Naive thymus-derived CD4-positive, alpha-beta T cell (primary cell): ENCODE measurements at regions of chr10 and their contacts with region 1.

Region 1: DNA sequence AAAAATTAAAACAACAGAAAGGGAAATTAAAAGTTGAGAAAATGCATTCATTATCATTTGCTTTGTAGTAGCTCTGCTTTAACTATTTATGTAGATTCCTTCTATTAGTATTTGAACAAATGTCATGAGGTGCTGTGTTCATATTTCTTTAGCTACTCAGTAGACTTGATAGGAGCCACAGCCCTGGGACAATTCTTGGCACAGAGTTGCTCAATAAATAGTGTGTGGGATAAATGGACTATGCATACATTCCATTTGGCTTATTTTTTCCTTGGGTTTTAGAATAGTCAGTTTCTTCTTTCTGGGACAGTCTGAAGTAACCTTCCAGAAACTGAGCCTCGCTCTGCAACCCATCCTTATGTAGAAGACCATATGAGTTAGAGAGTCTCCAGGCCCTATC is 13.4 kb downstream of the RPP30 start:
- DNase-seq: no peak
- ATAC-seq: no peak
- H3K4me3 ChIP-seq: no peak overlapping the region
- H3K4me3 Mint-ChIP-seq: no peak overlapping the region
- H3K27ac ChIP-seq: no peak overlapping the region
- H3K27ac Mint-ChIP-seq: no peak overlapping the region
- H3K4me1 ChIP-seq: no peaks in the 10 kb centered on the region
- H3K4me1 Mint-ChIP-seq: peaks cover 0 to 8% (median 4%) of the 10 kb centered on the region in 7 donors
- H3K27me3 ChIP-seq: no peaks in the 10 kb centered on the region
- H3K27me3 Mint-ChIP-seq: no peaks in the 10 kb centered on the region

Region 2: GRCh38 chr10:91088300-91089140 is 203.3 kb after region 1 on chr10:
- CTCF ChIA-PET with region 1: interaction called, 4 read pairs
- POLR2A ChIA-PET with region 1: no interaction called
- intact Hi-C with region 1: loop called in 1 of 2 experiments (anchors 1 kb)
- DNase-seq: peak in 6 of 9 donors; percentile 10 to 37 (median 26)
- ATAC-seq: peak; percentile 64
- H3K4me3 ChIP-seq: no peak overlapping the region
- H3K4me3 Mint-ChIP-seq: no peak overlapping the region
- H3K27ac ChIP-seq: no peak overlapping the region
- H3K27ac Mint-ChIP-seq: peak overlapping the region in 2 of 9 donors; percentile 15 to 42
- H3K4me1 ChIP-seq: no peaks in the 10 kb centered on the region
- H3K4me1 Mint-ChIP-seq: peaks cover 0 to 2% (median 0%) of the 10 kb centered on the region in 7 donors
- H3K27me3 ChIP-seq: no peaks in the 10 kb centered on the region
- H3K27me3 Mint-ChIP-seq: peaks cover 0 to 11% (median 0%) of the 10 kb centered on the region in 5 donors

Region 3: DNA sequence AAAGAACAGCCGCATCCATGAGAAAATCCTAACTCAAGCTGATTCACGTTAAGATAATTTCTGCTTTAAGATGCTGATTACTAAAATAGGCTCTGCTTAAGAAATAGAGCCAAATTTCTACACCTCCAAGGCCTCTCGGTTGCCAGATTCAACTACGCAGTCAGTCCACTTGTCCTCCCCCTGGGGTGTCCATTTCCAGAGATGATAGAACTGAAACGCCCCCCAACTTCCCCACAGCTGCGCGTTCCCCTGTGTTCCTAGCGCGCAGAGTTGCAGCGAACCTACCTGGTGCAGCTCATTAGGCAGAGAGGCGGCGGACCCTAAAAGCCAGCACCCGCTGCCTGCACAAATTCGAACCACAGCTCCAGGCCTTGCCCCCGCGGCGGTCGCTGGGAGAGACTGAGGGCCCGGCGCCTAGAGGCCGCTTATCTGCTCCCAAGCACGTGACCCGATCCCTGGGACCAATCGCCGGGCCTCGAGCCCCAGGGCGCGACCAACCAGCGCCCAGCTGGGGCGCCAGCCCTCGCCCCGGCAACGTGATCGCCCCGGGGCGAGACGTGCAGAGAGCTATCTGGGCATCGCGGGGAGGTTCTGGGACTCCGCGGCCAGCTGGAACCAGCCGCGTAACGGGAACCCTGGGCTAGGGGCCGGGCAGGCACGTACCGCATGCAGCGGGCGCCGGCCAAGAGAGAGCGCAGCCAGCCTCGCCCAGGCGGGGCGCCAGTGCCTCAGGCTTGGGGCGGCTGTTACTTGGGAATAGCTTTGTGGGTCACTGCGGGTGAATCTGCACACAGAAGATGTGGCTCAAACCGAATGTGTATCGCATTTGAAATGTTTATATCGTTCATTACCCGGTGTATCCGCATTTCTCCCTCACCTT is 747.7 kb after region 1 on chr10 and contains the start of gene PPP1R3C:
- CTCF ChIA-PET with region 1: no interaction called
- POLR2A ChIA-PET with region 1: no interaction called
- intact Hi-C with region 1: loop called (anchors 2 to 10 kb)
- DNase-seq: peak; percentile 5 to 60 (median 17)
- ATAC-seq: peak; percentile 65
- H3K4me3 ChIP-seq: peak within 1 kb of the TSS; percentile 33
- H3K4me3 Mint-ChIP-seq: peak within 1 kb of the TSS; percentile 68 to 76 (median 73)
- H3K27ac ChIP-seq: no peak within 1 kb of the TSS
- H3K27ac Mint-ChIP-seq: peak within 1 kb of the TSS in 1 of 9 donors; percentile 7
- H3K4me1 ChIP-seq: peaks cover 0 to 5% of the 10 kb centered on the region in 2 donors
- H3K4me1 Mint-ChIP-seq: peaks cover 0 to 15% (median 7%) of the 10 kb centered on the region in 7 donors
- H3K27me3 ChIP-seq: peaks cover 0 to 14% of the 10 kb centered on the region in 2 donors
- H3K27me3 Mint-ChIP-seq: peaks cover 61 to 74% (median 64%) of the 10 kb centered on the region in 5 donors
- total RNA-seq, gene PPP1R3C: 0.15 TPM in 1 of 5 experiments, not detected in the others